K562 (cell line): ENCODE measurements at regions of chr11 and their contacts with region 1.

Region 1: DNA sequence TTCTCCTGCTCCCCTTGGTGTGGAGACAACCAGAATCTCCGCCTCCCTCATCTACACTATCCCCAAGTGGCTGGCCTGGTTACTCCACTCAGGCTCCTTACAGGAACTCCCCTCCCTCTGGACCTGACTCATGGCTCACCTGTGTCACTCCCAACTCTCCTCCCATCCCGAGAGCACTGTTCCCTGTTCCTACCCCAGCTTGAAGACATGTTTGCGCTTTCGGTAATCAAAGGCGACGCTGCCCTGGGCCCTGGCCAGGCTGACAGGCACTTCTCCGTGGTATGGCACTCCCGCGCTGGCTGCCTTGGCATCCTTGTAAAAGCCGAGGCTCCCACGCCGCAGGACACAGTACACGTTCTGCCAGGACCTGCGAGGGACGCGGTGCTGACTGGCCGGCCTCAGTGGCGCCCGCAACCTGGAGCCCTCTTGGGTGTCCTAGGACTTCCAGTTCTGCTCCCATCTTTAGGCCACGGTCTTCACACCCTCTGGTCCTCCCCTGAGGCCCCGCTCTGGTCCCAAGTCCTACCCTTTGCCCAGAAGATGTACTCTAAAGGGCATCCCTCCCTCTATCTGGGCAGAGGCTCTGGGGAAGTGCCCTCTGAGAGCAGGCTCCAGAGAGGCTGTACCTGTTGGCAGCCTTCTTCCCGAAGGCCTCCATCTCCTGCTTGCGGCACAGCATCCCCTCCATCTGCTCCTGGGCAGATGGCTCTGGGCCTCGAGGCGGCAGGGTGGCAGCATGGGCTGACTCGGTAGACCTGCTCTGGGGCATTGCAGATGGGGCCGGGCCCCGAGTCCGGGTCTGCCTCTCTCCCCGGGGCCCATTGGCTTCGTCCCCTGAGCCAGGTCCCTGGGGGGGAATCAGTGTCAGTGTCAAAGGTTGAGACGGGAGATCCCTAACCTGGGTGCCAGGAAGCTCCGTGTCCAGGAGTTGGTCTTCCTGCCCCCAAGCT is 9.4 kb upstream of the RBM4B start:
- DNase-seq: no peak
- ATAC-seq: no peak
- H3K4me3 ChIP-seq: no peak overlapping the region
- H3K27ac ChIP-seq: no peak overlapping the region
- H3K4me1 ChIP-seq: peaks cover 0 to 3% of the 10 kb centered on the region in 2 experiments; a peak in 1 of 5 replicates
- H3K27me3 ChIP-seq: no peaks in the 10 kb centered on the region
- CTCF ChIP-seq: no peak
- EP300 ChIP-seq: no peak
- POLR2A ChIP-seq: no peak
- RAD21 ChIP-seq: no peak

Region 2: GRCh38 chr11:66568124-66568916 is 118.8 kb before region 1 on chr11 and contains the start of gene CTSF:
- CTCF ChIA-PET with region 1: no interaction called
- POLR2A ChIA-PET with region 1: no interaction called
- in situ Hi-C with region 1: loop called (anchors 5 kb)
- intact Hi-C with region 1: no loop called
- DNase-seq: peak; percentile 88 to 100 (median 100)
- ATAC-seq: peak; percentile 98
- H3K4me3 ChIP-seq: peak within 1 kb of the TSS; percentile 48
- H3K27ac ChIP-seq: no peak within 1 kb of the TSS; the same call in 2 of the 3 replicates
- H3K4me1 ChIP-seq: peaks cover 8 to 22% of the 10 kb centered on the region in 2 experiments; a peak in 4 of 5 replicates
- H3K27me3 ChIP-seq: peaks cover 0 to 10% of the 10 kb centered on the region in 2 experiments; a peak in 2 of 5 replicates
- CTCF ChIP-seq: no peak
- EP300 ChIP-seq: no peak
- POLR2A ChIP-seq: no peak
- RAD21 ChIP-seq: no peak
- polyA plus RNA-seq, gene CTSF: 0.41 to 0.55 TPM

Region 3: DNA sequence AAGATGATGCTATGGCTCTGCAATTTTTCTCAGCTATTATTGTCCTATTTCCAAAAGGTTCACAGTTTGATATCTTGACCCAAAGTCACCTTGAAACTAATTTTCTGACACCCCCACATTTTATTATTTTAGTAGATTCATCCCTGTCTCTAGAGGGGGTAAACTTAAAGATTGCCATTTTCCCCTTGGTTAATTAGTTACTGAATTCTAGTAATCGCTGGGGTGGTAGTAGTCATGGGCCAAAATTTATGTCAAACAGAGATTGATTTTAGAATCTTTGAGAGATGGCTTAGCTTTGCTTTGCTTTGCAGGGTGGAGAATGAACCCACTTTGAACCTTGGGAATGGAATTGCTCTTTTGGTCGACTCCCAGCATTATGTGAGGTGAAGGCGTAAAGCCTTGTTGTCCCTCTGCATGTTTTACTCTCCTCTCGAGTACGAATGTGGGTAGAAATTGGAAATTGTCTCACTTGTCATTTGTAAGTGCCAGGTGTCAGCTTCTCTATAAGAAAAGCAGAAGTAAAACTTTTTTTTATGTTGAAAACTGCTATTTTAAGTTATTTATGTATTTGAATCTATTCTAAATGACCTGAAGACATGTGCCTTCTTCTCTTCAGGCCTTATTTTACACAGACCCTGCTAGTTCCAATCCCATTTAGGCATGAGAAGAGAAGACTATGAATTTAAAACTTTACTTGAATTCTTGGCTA is 113.8 kb after region 1 on chr11:
- CTCF ChIA-PET with region 1: no interaction called
- POLR2A ChIA-PET with region 1: no interaction called
- in situ Hi-C with region 1: no loop called
- intact Hi-C with region 1: no loop called
- DNase-seq: no peak
- ATAC-seq: no peak
- H3K4me3 ChIP-seq: no peak overlapping the region
- H3K27ac ChIP-seq: no peak overlapping the region
- H3K4me1 ChIP-seq: no peaks in the 10 kb centered on the region
- H3K27me3 ChIP-seq: no peaks in the 10 kb centered on the region
- CTCF ChIP-seq: no peak
- EP300 ChIP-seq: no peak
- POLR2A ChIP-seq: no peak
- RAD21 ChIP-seq: no peak